Activated B cell treated with CpG ODN at 0.5 μM for 24 hours (primary cell): ENCODE measurements at regions of chr7 and their contacts with region 1.

Region 1: DNA sequence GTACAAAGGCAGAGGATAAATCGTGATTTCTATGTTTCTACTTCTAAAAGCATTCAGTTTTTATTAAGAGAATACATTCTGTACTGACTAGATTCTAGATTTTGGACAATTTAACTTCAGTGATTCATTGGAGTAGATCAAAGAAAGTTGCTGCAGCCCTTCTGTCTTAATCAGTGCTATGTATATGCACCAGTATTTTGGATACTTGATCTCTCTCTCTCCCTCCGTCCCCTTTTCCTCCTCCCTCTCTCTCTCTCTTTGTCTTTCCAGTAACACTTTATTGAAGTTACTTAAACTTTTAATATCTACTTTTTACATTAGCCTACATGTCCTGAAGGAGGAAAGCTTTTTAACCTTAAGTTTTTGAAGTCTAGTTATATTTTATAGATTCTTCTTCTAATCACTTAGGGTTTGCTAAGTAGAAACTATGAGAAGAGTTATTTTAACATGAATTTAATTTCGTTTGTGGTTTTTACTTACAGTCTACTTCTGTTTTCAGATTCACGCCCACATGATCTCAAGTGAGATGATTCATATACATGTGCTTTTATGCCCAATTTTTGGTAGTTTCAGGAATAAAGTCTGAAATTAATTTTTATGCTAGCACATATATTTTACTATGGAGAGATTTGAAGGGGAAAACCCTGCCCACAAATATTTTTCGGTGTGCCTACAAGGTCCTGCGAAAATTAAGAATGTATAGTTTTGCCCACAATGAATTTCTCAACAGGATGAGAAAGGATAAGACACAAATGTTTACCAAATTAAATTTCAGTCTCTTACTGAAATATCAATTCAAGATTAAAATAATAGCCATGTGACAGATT is 9.1 kb downstream of the MDFIC start:
- DNase-seq: no peak
- ATAC-seq: peak; percentile 57
- H3K4me3 Mint-ChIP-seq: no peak overlapping the region
- H3K27ac Mint-ChIP-seq: no peak overlapping the region
- H3K4me1 Mint-ChIP-seq: peaks cover 20% of the 10 kb centered on the region
- H3K27me3 Mint-ChIP-seq: no peaks in the 10 kb centered on the region
- CTCF ChIP-seq: no peak

Region 2: GRCh38 chr7:114051871-114052331 is 879.1 kb before region 1 on chr7:
- CTCF ChIA-PET with region 1: no interaction called
- POLR2A ChIA-PET with region 1: no interaction called
- intact Hi-C with region 1: loop called (anchors 10 kb)
- DNase-seq: no peak
- ATAC-seq: peak; percentile 90
- H3K4me3 Mint-ChIP-seq: peak overlapping the region; percentile 33
- H3K27ac Mint-ChIP-seq: peak overlapping the region; percentile 32
- H3K4me1 Mint-ChIP-seq: peaks cover 41% of the 10 kb centered on the region
- H3K27me3 Mint-ChIP-seq: no peaks in the 10 kb centered on the region
- CTCF ChIP-seq: no peak

Region 3: DNA sequence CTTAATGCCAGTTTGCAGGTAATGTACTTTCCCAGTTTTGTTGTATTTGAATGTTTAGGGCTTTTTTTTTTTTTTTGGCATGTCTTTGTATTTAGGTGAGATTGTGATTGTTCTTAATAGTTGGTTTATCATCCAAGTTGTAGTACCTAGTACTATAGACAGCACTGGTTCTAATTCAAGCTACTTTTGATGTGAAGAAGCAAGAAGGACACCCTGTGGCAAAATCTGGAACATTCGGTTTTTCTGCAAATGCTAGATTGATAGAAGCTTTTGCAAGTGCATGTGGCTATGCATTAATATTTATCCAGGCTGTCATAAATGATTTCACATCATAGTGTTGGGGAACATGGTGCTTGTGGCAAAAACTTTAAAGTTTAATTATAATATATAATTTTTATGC is 267.5 kb before region 1 on chr7:
- CTCF ChIA-PET with region 1: no interaction called
- POLR2A ChIA-PET with region 1: no interaction called
- intact Hi-C with region 1: no loop called
- DNase-seq: no peak
- ATAC-seq: no peak
- H3K4me3 Mint-ChIP-seq: no peak overlapping the region
- H3K27ac Mint-ChIP-seq: no peak overlapping the region
- H3K4me1 Mint-ChIP-seq: no peaks in the 10 kb centered on the region
- H3K27me3 Mint-ChIP-seq: no peaks in the 10 kb centered on the region
- CTCF ChIP-seq: no peak

Region 4: DNA sequence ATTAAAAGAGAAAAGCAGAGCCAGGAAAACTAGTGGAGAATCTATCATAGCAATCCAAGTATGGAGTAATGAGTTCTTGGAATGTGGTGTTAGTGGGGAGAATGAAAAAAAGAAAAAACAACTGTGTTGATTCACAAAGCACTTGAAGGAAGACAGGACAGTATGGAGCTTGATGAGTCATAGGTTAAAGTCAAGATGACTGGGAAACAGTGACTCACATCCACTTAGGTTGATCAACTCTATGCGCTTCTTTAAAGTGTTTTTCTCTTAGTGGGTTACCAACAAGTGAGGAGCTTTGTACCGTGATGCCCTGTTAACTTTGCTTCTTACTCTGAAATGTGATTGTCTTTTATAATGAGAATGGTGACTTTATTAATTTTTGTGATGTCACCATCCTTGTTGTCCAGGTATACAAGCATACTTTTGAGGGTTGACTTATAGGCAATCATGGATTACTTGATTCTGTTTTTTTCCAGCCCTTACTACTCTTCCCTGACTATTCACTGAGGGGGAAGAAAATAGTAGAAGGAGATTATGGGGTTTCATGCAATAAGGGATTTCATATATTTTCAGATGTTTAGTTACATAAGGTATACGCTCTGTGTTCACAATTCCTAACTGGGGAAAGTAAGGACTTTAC is 41.3 kb before region 1 on chr7:
- CTCF ChIA-PET with region 1: no interaction called
- POLR2A ChIA-PET with region 1: interaction called, 3 read pairs
- intact Hi-C with region 1: loop called (anchors 1 kb)
- DNase-seq: no peak
- ATAC-seq: peak; percentile 97
- H3K4me3 Mint-ChIP-seq: no peak overlapping the region
- H3K27ac Mint-ChIP-seq: peak overlapping the region; percentile 2
- H3K4me1 Mint-ChIP-seq: peaks cover 8% of the 10 kb centered on the region
- H3K27me3 Mint-ChIP-seq: no peaks in the 10 kb centered on the region
- CTCF ChIP-seq: no peak

Region 5: DNA sequence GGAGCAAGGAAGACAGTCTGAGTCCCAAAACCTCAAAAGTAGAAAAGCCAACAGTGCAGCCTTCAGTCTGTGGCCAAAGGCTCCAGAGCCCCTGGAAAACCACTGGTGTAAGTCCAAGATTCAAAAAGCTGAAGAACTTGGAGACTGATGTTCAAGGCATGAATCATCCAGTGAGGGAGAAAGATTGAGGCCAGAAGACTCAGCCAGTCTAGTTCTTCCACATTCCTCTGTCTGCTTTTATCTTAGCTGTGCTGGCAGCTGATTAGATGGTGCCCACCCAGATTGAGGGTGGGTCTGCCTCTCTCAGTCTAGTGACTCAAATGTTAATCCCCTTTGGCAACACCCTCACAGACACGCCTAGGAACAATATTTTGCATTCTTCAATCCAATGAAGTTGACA is 29.3 kb before region 1 on chr7:
- CTCF ChIA-PET with region 1: no interaction called
- POLR2A ChIA-PET with region 1: interaction called, 11 read pairs
- intact Hi-C with region 1: no loop called
- DNase-seq: no peak
- ATAC-seq: no peak
- H3K4me3 Mint-ChIP-seq: no peak overlapping the region
- H3K27ac Mint-ChIP-seq: no peak overlapping the region
- H3K4me1 Mint-ChIP-seq: no peaks in the 10 kb centered on the region
- H3K27me3 Mint-ChIP-seq: no peaks in the 10 kb centered on the region
- CTCF ChIP-seq: no peak

Region 6: GRCh38 chr7:114916261-114916892 is 14.7 kb before region 1 on chr7:
- CTCF ChIA-PET with region 1: interaction called, 8 read pairs
- POLR2A ChIA-PET with region 1: interaction called, 53 read pairs
- intact Hi-C with region 1: loop called (anchors 1 kb)
- DNase-seq: no peak
- ATAC-seq: peak; percentile 92
- H3K4me3 Mint-ChIP-seq: peak overlapping the region; percentile 75
- H3K27ac Mint-ChIP-seq: peak overlapping the region; percentile 91
- H3K4me1 Mint-ChIP-seq: peaks cover 59% of the 10 kb centered on the region
- H3K27me3 Mint-ChIP-seq: no peaks in the 10 kb centered on the region
- CTCF ChIP-seq: no peak

Region 7: DNA sequence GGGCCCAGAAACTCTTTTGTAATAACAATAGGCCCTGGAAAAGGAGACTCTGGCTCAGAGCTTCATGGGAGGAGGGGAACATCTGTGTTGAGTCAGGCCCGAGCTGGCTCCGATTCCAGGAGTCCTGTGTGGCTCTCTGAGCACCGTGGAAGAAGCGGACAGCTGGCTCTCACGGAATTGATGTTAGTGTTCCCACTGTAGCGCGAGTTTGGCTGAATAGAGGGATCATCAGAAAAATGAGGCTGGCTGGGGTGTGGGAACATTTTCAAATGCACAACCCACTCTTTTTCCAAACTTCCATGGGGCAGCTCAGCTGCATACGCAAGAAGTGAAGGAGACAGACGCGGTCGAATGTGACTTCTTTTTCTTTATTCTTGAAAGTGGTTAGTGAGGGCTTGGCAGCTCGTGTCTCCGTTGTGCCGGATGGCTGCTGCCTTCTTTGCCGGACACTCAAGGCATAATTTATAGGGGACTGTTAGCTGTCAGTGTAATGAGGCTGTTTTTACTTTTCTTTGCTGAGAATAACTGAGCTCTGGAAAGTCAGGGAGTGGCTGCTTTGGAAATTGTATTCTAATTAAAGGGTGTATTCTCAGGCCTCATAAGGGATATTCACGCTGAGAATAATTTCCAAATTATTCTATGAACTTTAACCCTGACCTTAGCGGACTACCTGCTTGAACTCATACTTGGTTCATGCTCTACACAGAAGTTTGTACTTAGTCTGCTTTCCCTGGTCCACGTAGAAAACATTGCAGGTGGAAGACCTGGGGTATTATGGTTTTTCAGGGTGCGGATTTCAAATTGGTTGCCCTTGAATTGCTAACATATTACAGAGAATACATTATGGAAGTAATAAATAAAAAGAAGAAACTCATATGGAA is 13.9 kb after region 1 on chr7:
- CTCF ChIA-PET with region 1: interaction called, 7 read pairs
- POLR2A ChIA-PET with region 1: interaction called, 7 read pairs
- intact Hi-C with region 1: loop called (anchors 1 kb)
- DNase-seq: no peak
- ATAC-seq: no peak
- H3K4me3 Mint-ChIP-seq: no peak overlapping the region
- H3K27ac Mint-ChIP-seq: peak overlapping the region; percentile 35
- H3K4me1 Mint-ChIP-seq: peaks cover 78% of the 10 kb centered on the region
- H3K27me3 Mint-ChIP-seq: no peaks in the 10 kb centered on the region
- CTCF ChIP-seq: no peak

Region 8: GRCh38 chr7:116862234-116862950 is 1931.3 kb after region 1 on chr7 and contains the start of gene CAPZA2:
- CTCF ChIA-PET with region 1: no interaction called
- POLR2A ChIA-PET with region 1: no interaction called
- intact Hi-C with region 1: loop called (anchors 10 kb)
- DNase-seq: peak; percentile 98
- ATAC-seq: peak; percentile 87
- H3K4me3 Mint-ChIP-seq: peak within 1 kb of the TSS; percentile 98
- H3K27ac Mint-ChIP-seq: peak within 1 kb of the TSS; percentile 93
- H3K4me1 Mint-ChIP-seq: peaks cover 39% of the 10 kb centered on the region
- H3K27me3 Mint-ChIP-seq: peaks cover 5% of the 10 kb centered on the region
- CTCF ChIP-seq: no peak
- total RNA-seq, gene CAPZA2: 101 and 110 TPM in 2 replicates